K562 (cell line): ENCODE measurements at regions of chr5 and their contacts with region 1.

Region 1: DNA sequence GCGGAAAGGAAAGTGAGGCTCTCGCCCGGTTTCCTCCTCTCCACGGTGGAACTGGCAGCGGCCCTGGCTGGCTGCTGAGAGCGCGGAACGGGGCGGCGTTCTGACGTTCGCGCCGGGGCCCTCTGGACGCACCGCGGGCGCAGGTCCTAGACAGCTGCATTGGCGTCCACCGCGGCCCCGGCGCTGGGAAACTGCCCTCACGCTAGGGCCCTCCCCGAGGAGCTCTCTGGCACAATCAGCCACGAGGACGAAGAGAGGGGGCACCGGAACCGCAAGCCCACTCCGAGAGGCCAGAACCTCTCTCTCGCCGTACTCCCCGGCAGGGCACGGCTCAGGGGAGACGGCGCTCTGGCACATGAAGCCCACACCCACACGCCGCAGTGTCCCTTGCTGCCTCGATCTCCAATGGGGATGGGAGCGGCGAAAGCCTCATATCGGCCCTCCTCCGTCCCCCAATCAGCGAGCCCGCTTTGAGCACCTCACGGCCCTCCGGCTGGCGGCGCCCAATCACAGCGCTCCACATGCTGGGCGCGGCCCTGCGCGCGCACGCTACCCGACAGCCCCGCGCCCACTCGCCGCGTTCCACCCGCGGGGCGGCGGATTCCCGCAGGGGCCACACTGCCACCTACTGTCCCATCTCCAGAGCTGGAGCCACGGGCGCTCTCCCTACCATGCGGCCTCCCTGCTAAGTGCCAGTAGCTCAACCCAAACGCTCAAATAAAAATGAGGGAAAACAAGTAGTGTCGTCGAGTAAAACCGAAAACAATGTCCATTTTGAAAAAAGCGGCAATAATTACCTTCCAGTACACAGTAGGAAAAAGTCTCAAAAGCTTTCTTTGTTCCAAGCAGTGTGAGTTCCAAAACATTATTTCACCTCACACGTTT is 11.8 kb downstream of the MRPS27 start:
- DNase-seq: peak; percentile 98 to 99 (median 98)
- ATAC-seq: peak; percentile 97
- H3K4me3 ChIP-seq: peak overlapping the region; percentile 68
- H3K27ac ChIP-seq: peak overlapping the region; percentile 96
- H3K4me1 ChIP-seq: peaks cover 25 to 30% of the 10 kb centered on the region in 2 experiments
- H3K27me3 ChIP-seq: no peaks in the 10 kb centered on the region
- CTCF ChIP-seq: peak; percentile 89 to 92 (median 90)
- EP300 ChIP-seq: no peak; the same call in 1 of the 2 replicates
- POLR2A ChIP-seq: peak; percentile 98
- RAD21 ChIP-seq: peak; percentile 77 to 90

Region 2: DNA sequence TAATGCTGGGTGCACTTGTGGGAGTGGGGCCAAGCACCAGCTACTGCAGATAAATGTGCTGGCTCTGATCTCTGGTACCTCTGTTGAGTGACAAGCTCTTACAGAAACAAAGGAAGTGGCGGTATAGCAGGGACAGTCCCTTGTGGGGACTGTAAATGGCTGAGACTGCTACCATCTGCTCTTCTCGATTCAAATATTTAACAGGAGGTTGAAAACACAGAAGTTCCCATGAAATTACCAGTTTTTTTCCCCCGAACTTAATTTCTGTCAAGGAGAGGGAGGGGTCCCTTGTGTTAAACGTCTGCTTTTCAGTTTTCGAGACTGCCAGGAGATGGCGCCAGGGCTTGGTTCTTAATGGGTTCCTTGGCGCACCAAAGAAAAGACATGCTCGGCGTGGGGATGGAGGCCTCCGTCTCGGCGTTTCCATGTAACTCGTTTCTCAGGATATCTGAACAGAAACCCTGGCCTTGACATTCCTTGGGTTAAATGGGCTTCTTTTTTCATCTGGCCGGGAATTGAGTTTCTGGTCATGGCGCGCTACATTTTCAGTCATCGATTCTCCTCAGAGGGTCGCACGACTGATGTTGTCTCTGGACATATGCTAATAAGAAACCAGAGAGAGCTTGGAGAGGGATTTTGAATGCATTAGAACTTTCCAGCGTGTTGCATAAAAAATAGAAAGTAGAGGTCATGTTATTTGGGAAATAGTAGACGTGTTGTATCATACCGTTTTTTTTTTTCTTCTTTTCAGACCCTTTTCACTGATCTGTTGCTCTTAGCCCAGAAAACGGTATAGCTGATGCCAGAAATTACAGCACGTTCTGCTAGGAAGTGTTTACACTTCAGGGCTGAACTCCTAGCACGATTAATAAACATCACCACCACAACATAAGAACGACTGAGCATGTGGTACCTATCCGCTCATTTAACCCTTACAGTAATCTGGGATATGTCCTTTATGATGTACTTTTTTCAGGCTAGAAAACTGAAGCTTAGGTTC is 525.1 kb before region 1 on chr5:
- CTCF ChIA-PET with region 1: interaction called, 9 read pairs
- POLR2A ChIA-PET with region 1: interaction called, 3 read pairs
- in situ Hi-C with region 1: loop called (anchors 25 kb)
- intact Hi-C with region 1: loop called (anchors 1 kb)
- DNase-seq: peak; percentile 58 to 75 (median 60)
- ATAC-seq: peak; percentile 98
- H3K4me3 ChIP-seq: no peak overlapping the region
- H3K27ac ChIP-seq: no peak overlapping the region
- H3K4me1 ChIP-seq: no peaks in the 10 kb centered on the region
- H3K27me3 ChIP-seq: peaks cover 2 to 18% of the 10 kb centered on the region in 2 experiments; a peak in 4 of 5 replicates
- CTCF ChIP-seq: peak; percentile 77 to 87 (median 85)
- EP300 ChIP-seq: no peak
- POLR2A ChIP-seq: no peak
- RAD21 ChIP-seq: peak; percentile 82 to 83

Region 3: DNA sequence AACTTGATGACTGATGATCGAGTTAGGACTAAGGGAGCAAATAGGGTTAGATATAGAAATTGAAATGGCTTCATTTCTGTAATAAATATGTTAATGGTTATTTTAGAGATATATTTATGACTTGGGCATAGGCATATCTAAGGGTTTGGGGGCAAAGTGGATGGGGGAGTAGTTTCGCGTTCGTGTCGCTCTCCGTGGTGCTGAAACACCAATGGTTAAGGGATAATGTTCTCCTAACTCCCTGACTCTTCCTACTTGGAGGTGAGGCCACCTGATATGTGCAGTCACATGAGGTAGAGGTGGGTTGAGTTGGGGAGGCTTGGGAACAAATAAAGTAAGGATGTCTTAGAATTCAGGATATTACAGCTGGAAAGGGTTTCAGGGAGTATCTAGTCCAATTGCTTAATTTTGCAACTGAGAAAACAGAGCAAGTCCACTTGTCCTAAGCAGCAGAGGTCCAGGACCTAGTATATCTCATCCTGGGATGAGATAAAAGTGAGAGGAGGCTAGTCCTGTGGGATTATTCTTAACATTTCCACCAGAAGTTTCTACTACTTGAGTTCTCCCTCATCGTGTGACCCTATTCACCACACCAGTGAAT is 244.9 kb before region 1 on chr5:
- CTCF ChIA-PET with region 1: no interaction called
- POLR2A ChIA-PET with region 1: no interaction called
- in situ Hi-C with region 1: no loop called
- intact Hi-C with region 1: no loop called
- DNase-seq: peak; percentile 46 to 64 (median 52)
- ATAC-seq: peak; percentile 76
- H3K4me3 ChIP-seq: no peak overlapping the region
- H3K27ac ChIP-seq: no peak overlapping the region
- H3K4me1 ChIP-seq: peaks cover 4% of the 10 kb centered on the region in 2 experiments; a peak in 2 of 5 replicates
- H3K27me3 ChIP-seq: no peaks in the 10 kb centered on the region
- CTCF ChIP-seq: no peak
- EP300 ChIP-seq: no peak
- POLR2A ChIP-seq: no peak
- RAD21 ChIP-seq: no peak

Region 4: DNA sequence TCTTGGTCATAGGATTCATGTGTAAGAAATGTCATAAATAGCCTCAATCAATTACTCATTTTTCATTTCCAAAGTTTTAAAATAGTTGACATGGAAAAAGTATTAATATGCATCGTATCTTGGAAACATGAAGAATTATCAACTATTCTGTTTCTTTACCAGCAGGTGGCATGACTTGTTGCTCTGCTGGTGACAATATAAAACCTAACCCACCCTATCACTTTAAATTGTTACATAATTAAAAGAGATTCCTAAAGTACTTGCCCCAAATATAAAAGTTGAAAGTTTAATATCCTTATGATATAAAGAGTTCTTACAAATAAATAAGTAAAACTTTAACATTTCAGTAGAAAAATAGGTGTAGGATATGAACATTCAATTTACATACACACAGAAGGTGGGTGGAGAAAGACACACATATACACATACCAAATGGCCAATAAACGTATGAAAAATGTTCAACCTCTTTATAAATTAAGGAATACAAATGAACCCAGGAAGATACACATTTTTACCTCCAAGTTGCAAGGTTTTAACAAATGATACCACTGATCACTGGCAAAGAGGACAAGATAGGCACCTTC is 170.3 kb before region 1 on chr5:
- CTCF ChIA-PET with region 1: interaction called, 3 read pairs
- POLR2A ChIA-PET with region 1: interaction called, 3 read pairs
- in situ Hi-C with region 1: no loop called
- intact Hi-C with region 1: loop called (anchors 2 kb)
- DNase-seq: peak in 2 of 4 experiments; percentile 26
- ATAC-seq: 0 out of 3 replicates have a peak, but pooled peaks have one; percentile 26
- H3K4me3 ChIP-seq: no peak overlapping the region
- H3K27ac ChIP-seq: no peak overlapping the region
- H3K4me1 ChIP-seq: peaks cover 0 to 11% of the 10 kb centered on the region in 2 experiments; a peak in 3 of 5 replicates
- H3K27me3 ChIP-seq: no peaks in the 10 kb centered on the region
- CTCF ChIP-seq: peak in 2 of 3 experiments; percentile 24 to 68; a peak in 3 of 6 replicates
- EP300 ChIP-seq: no peak
- POLR2A ChIP-seq: no peak
- RAD21 ChIP-seq: peak; percentile 62 to 78

Region 5: DNA sequence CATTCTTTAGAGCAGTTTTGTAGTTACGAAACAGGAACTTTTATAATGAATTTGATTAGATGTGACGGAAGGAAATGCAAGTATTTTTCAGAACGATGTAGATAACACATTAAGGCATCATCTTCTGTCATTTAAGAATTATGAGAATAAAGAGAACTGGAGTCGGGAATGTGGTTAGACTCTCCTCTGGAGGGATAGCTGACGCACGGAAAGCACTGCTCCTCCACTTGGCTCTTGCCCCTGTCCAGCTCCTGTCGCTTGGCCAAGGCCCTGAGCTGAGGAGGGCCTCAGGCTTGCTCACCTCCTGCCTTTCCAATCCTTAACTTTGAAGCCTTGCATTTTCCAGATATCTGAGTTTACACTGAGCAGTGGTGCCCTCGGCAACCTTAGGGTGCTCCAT is 140.4 kb before region 1 on chr5:
- CTCF ChIA-PET with region 1: no interaction called
- POLR2A ChIA-PET with region 1: no interaction called
- in situ Hi-C with region 1: no loop called
- intact Hi-C with region 1: no loop called
- DNase-seq: no peak
- ATAC-seq: no peak
- H3K4me3 ChIP-seq: no peak overlapping the region
- H3K27ac ChIP-seq: no peak overlapping the region
- H3K4me1 ChIP-seq: peaks cover 13 to 22% of the 10 kb centered on the region in 2 experiments; a peak in 4 of 5 replicates
- H3K27me3 ChIP-seq: no peaks in the 10 kb centered on the region
- CTCF ChIP-seq: no peak
- EP300 ChIP-seq: no peak
- POLR2A ChIP-seq: no peak
- RAD21 ChIP-seq: no peak

Region 6: GRCh38 chr5:72244862-72245371 is 63.3 kb before region 1 on chr5:
- CTCF ChIA-PET with region 1: no interaction called
- POLR2A ChIA-PET with region 1: interaction called, 4 read pairs
- in situ Hi-C with region 1: no loop called
- intact Hi-C with region 1: loop called (anchors 5 kb)
- DNase-seq: peak; percentile 31 to 75 (median 50)
- ATAC-seq: peak; percentile 92
- H3K4me3 ChIP-seq: no peak overlapping the region
- H3K27ac ChIP-seq: peak overlapping the region; percentile 36; the same call in 1 of the 3 replicates
- H3K4me1 ChIP-seq: peaks cover 18 to 54% of the 10 kb centered on the region in 2 experiments
- H3K27me3 ChIP-seq: no peaks in the 10 kb centered on the region
- CTCF ChIP-seq: peak; percentile 51 to 70 (median 60)
- EP300 ChIP-seq: no peak
- POLR2A ChIP-seq: no peak
- RAD21 ChIP-seq: peak; percentile 65 to 79

Region 7: DNA sequence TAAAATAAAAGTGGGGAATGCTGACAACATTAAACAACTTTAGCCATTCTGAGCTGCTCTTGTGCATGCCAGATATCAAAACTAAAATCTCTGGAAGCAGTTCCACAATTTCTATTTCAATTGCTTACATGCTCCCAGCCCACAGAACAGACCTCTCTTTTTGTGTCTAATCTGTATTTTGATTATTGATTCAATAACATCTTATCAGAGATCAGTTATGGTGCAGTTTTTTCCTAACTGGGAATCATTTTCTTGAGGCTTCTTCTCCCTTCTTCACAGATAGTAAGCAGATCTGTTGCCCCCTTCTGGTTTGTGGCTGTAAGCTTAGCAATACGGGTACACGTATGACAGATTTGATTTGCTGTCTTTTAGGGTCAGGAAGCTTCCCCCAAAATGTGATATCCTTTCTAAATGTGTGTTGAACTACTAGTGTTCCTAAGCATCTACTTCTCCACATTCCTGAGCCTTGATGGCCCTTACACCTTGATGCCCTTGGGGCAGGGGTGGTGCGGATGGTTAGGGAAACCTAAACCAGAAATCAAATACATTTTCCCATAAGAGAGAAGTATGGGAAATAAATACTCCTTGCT is 27.5 kb before region 1 on chr5:
- CTCF ChIA-PET with region 1: no interaction called
- POLR2A ChIA-PET with region 1: interaction called, 13 read pairs
- in situ Hi-C with region 1: no loop called
- intact Hi-C with region 1: loop called (anchors 1 kb)
- DNase-seq: peak; percentile 38 to 62 (median 46)
- ATAC-seq: peak; percentile 81
- H3K4me3 ChIP-seq: no peak overlapping the region
- H3K27ac ChIP-seq: peak overlapping the region; percentile 73; the same call in 2 of the 3 replicates
- H3K4me1 ChIP-seq: peaks cover 7 to 33% of the 10 kb centered on the region in 2 experiments; a peak in 3 of 5 replicates
- H3K27me3 ChIP-seq: no peaks in the 10 kb centered on the region
- CTCF ChIP-seq: peak; percentile 50 to 66 (median 62)
- EP300 ChIP-seq: no peak
- POLR2A ChIP-seq: no peak
- RAD21 ChIP-seq: peak; percentile 44 to 58; a peak in 3 of 4 replicates

Region 8: GRCh38 chr5:72860499-72860898 is 552.3 kb after region 1 on chr5:
- CTCF ChIA-PET with region 1: no interaction called
- POLR2A ChIA-PET with region 1: no interaction called
- in situ Hi-C with region 1: no loop called
- intact Hi-C with region 1: no loop called
- DNase-seq: no peak
- ATAC-seq: no peak; the same call in 2 of the 3 replicates
- H3K4me3 ChIP-seq: no peak overlapping the region
- H3K27ac ChIP-seq: 0 out of 3 replicates have a peak overlapping the region, but pooled peaks have one; percentile 16
- H3K4me1 ChIP-seq: no peaks in the 10 kb centered on the region
- H3K27me3 ChIP-seq: no peaks in the 10 kb centered on the region
- CTCF ChIP-seq: no peak
- EP300 ChIP-seq: no peak
- POLR2A ChIP-seq: no peak
- RAD21 ChIP-seq: no peak